Tibial artery (tissue), 4 donors: ENCODE measurements at regions of chr9 and their contacts with region 1.

Region 1: DNA sequence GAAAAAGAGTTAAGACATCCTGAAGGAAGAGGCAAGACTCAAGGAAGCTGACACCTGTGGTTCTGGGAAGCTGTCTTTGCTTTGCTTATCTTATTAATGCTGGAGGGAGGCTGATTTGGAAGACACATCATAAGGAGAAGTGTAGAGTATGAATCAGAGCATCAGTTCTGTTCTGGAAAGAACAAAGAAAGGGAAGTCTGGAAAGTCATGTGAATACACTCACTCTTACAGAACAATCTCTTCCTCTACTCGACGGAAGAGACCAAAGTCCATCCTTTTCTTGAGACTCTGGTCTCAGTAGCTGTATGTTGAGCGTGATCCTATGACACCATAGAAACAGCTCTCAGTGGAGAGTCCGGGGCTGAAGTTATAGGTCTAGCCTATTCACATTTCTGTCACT is 326.4 kb downstream of the OSTF1 start:
- DNase-seq: no peak
- H3K4me3 ChIP-seq: no peak overlapping the region
- H3K27ac ChIP-seq: peak overlapping the region; percentile 29 to 42
- H3K4me1 ChIP-seq: peaks cover 0 to 20% (median 4%) of the 10 kb centered on the region in 4 donors
- H3K27me3 ChIP-seq: no peaks in the 10 kb centered on the region
- CTCF ChIP-seq: no peak

Region 2: DNA sequence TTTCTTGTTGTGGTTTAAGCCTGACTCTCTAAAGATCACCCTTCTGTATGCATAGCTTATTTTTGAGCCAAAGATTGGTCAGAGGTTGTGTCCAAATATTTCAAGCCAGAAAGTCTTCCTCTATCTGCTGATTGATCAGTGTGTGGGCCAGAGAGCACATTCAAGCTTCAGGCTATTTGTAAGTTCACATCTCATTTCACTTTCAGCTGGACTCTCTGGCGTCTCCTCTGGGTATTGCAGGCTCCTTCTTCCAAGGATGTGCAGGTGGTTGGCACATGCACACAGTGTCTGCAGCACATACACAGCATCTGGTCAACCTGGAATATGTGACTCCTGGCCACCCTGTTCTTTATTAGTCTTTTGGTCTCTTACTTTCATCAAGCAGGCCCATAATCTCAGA is 1747.0 kb before region 1 on chr9:
- intact Hi-C with region 1: loop called (anchors 5 kb)
- DNase-seq: no peak
- H3K4me3 ChIP-seq: no peak overlapping the region
- H3K27ac ChIP-seq: no peak overlapping the region
- H3K4me1 ChIP-seq: no peaks in the 10 kb centered on the region
- H3K27me3 ChIP-seq: no peaks in the 10 kb centered on the region
- CTCF ChIP-seq: no peak

Region 3: GRCh38 chr9:75754080-75754479 is 339.3 kb after region 1 on chr9:
- intact Hi-C with region 1: no loop called
- DNase-seq: no peak
- H3K4me3 ChIP-seq: no peak overlapping the region
- H3K27ac ChIP-seq: no peak overlapping the region
- H3K4me1 ChIP-seq: no peaks in the 10 kb centered on the region
- H3K27me3 ChIP-seq: no peaks in the 10 kb centered on the region
- CTCF ChIP-seq: no peak

Region 4: DNA sequence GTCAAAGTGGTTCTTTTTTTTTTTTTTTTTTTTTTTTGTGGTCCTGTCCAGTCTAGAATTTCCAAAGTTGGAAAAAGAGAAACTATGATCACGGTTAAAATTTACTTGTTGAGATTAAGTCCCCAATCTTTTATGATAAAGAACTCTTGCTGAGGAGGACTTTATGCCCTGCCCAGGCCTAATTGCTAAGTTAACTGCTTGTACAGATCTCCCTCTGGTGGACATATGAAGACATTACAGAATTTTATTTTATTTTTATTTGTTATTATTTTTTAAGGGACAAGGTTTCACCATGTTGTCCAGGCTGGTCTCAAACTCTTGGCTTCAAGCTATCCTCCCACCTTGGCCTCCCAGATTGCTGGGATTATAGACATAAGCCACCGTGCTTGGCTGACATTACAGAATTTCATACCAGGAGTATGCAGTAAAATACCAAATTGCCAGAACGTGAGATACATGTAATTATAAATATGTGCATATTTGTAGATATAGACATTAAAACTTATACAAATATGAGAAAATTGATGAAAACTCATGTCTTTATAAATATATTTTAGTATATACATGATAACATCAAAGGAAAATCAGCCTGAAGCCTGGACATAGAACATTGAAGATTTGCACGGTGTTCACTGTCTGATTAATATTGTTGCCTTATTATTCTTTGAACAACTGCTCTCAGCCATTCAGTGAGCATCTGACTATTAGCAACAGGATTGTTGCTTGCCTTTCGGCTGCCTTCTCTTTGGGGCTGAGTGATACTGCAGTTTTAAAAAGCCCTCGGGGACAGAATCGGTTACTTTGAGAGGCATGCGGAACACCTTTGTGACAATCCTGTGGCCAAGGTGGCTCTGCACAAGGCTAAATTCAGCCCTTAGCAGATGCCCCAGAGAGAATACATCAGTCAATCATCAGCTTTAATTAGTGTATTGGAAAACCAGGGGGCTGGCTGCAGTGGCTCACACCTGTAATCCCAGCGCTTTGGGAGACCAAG is 888.5 kb after region 1 on chr9:
- intact Hi-C with region 1: no loop called
- DNase-seq: no peak
- H3K4me3 ChIP-seq: no peak overlapping the region
- H3K27ac ChIP-seq: no peak overlapping the region
- H3K4me1 ChIP-seq: peaks cover 0 to 3% (median 1%) of the 10 kb centered on the region in 4 donors
- H3K27me3 ChIP-seq: peaks cover 0 to 4% of the 10 kb centered on the region in 2 donors
- CTCF ChIP-seq: peak; percentile 61 to 73